ENCODE measurements at regions of chr7 and their contacts with region 1.

Region 1: DNA sequence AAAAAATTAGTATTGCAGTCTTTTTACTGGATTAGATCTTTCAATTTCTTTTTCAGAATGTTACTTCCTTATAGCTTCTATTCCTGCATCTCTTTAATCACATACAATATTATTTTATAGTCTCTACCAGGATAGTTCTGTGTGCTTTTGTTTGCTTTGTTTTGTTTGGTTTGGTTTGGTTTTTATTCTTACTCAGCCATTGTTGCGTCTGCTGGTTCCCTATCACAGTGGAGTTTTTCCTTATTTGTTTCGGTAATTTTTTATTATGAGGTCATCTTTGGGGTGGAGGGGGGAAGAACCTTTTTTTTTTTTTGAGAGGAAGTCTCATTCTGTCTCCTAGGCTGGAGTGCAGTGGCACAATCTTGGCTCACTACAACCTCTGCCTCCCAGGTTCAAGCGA is 9.0 kb upstream of the BAIAP2L1 start:
- DNase-seq: no peak
- ATAC-seq: no peak
- H3K4me3 ChIP-seq: no peak overlapping the region
- H3K27ac ChIP-seq: no peak overlapping the region
- H3K4me1 ChIP-seq: no peaks in the 10 kb centered on the region; a peak in 1 of 5 replicates
- H3K27me3 ChIP-seq: peaks cover 20 to 56% of the 10 kb centered on the region in 2 experiments
- CTCF ChIP-seq: no peak
- EP300 ChIP-seq: no peak
- POLR2A ChIP-seq: no peak
- RAD21 ChIP-seq: no peak

Region 2: GRCh38 chr7:98300595-98301372 is 109.1 kb before region 1 on chr7:
- CTCF ChIA-PET with region 1: no interaction called
- POLR2A ChIA-PET with region 1: no interaction called
- in situ Hi-C with region 1: loop called (anchors 5 kb)
- intact Hi-C with region 1: no loop called
- DNase-seq: peak in 3 of 4 experiments; percentile 50 to 68 (median 61)
- ATAC-seq: peak; percentile 71
- H3K4me3 ChIP-seq: no peak overlapping the region
- H3K27ac ChIP-seq: no peak overlapping the region
- H3K4me1 ChIP-seq: peaks cover 0 to 27% of the 10 kb centered on the region in 2 experiments; a peak in 3 of 5 replicates
- H3K27me3 ChIP-seq: peaks cover 3 to 36% of the 10 kb centered on the region in 2 experiments; a peak in 3 of 5 replicates
- CTCF ChIP-seq: no peak
- EP300 ChIP-seq: no peak
- POLR2A ChIP-seq: no peak
- RAD21 ChIP-seq: no peak

Region 3: DNA sequence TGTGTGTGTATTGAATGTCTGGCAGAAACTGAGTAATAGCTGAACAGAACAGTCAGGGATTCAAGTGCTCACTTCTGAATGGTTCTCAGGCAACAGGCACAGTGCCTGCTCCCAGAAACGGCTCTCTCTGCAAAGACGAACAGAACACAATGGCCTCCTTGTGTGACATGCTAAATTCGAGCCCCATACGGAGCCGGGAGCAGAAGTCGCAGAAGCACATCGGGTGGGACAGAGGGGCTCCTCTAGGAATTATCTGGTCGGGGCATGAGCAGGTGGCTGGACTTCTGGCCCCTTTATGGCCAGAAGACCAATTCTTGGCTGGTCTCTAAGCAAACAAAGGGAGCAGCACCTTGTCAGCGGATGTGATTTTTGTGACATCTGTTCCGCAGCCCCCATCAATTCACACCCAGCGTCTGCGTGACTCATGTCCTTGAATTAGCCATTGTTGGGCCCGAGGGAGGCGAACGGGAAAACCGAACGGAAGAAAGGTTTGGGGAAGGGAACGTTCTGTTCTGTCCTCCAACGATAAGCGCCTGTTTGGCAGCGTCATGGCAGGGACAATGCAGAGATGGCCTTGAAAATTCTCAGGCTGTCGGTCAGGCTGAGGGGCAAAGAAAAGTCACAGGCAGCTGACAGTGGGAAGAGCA is 160.0 kb after region 1 on chr7:
- CTCF ChIA-PET with region 1: no interaction called
- POLR2A ChIA-PET with region 1: no interaction called
- in situ Hi-C with region 1: no loop called
- intact Hi-C with region 1: no loop called
- DNase-seq: peak in 1 of 4 experiments; percentile 22
- ATAC-seq: no peak
- H3K4me3 ChIP-seq: no peak overlapping the region
- H3K27ac ChIP-seq: no peak overlapping the region
- H3K4me1 ChIP-seq: no peaks in the 10 kb centered on the region; a peak in 1 of 5 replicates
- H3K27me3 ChIP-seq: peaks cover 28 to 39% of the 10 kb centered on the region in 2 experiments
- CTCF ChIP-seq: no peak
- EP300 ChIP-seq: no peak
- POLR2A ChIP-seq: no peak
- RAD21 ChIP-seq: no peak

Measured in K562 (cell line).